ENCODE measurements at regions of chr3 and their contacts with region 1.

Region 1: GRCh38 chr3:100400780-100401673 is at the starts of genes LNP1 and TOMM70:
- DNase-seq: peak; percentile 91
- H3K4me3 Mint-ChIP-seq: peak within 1 kb of the TSS; percentile 96
- H3K27ac Mint-ChIP-seq: peak within 1 kb of the TSS; percentile 99
- H3K4me1 Mint-ChIP-seq: peaks cover 60% of the 10 kb centered on the region
- H3K27me3 Mint-ChIP-seq: peaks cover 2% of the 10 kb centered on the region
- total RNA-seq, gene LNP1: 2.4 and 2.6 TPM in 2 replicates
- total RNA-seq, gene TOMM70: 60.0 and 62.9 TPM in 2 replicates

Region 2: DNA sequence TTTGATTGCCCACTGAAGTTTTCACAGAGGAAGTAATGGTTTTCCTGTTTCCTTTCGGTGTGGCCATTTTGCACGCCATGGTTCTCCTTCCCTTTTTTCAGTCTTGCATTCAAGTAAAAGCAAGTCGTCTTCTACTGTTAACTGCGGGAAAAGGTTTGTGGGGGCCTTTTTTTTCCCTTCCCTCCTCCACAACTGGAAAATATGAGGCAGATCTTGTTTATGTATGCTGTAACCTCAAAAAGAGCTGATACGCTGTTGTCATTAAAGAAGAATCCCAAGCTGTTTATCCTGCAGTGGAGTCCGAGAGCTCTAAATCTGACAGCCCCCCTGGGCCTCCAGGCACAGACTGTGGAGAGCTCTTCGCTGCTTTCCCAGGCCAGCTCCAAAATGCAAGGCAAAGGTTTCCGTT is 327.1 kb before region 1 on chr3:
- intact Hi-C with region 1: loop called (anchors 5 kb)
- DNase-seq: peak; percentile 8
- H3K4me3 Mint-ChIP-seq: peak overlapping the region; percentile 70
- H3K27ac Mint-ChIP-seq: peak overlapping the region; percentile 95
- H3K4me1 Mint-ChIP-seq: peaks cover 68% of the 10 kb centered on the region
- H3K27me3 Mint-ChIP-seq: no peaks in the 10 kb centered on the region

Region 3: DNA sequence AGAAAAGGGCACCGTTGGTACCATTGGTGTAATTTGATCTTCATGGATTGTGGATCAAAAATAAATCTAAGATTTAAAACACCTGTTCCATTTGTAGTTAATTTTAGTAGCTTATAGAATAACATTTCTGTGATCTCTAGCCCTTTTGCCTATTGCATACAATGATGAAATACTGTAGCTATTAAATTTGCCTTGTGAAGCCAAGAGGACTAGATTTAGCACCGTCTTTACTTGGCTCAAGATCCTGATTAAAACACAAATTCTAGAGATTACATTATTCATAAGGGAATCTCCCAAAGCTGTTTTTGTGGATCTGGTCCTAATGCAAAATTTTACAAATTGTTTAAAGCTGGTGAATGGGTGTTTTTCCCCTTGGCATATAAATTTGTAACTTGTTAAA is 132.0 kb before region 1 on chr3:
- intact Hi-C with region 1: no loop called
- DNase-seq: no peak
- H3K4me3 Mint-ChIP-seq: no peak overlapping the region
- H3K27ac Mint-ChIP-seq: no peak overlapping the region
- H3K4me1 Mint-ChIP-seq: peaks cover 20% of the 10 kb centered on the region
- H3K27me3 Mint-ChIP-seq: peaks cover 2% of the 10 kb centered on the region

Region 4: GRCh38 chr3:100334488-100335351 is 66.3 kb before region 1 on chr3 and contains the start of gene NIT2:
- intact Hi-C with region 1: loop called (anchors 1 kb)
- DNase-seq: peak; percentile 73
- H3K4me3 Mint-ChIP-seq: peak within 1 kb of the TSS; percentile 94
- H3K27ac Mint-ChIP-seq: peak within 1 kb of the TSS; percentile 98
- H3K4me1 Mint-ChIP-seq: peaks cover 14% of the 10 kb centered on the region
- H3K27me3 Mint-ChIP-seq: no peaks in the 10 kb centered on the region
- total RNA-seq, gene NIT2: 65.9 and 69.5 TPM in 2 replicates

Region 5: DNA sequence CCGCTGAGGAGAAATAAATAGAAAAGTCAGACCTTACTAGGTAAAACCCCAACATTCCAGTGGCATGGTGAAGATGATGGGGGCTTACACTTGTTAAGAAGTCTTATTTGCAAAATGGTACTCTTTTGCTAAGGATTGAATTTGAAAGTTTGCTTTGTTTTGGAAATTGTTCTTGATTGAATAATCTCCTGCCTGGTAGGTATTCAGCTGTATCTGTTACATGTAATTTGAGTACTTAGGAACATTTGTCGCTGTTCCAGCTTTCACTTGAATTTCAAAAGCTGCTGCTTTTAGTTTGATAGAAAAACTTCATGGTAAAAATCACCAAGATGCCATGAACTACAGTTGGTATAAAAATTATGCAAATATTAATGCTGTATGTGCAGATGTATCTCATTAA is 352.8 kb after region 1 on chr3:
- intact Hi-C with region 1: no loop called
- DNase-seq: no peak
- H3K4me3 Mint-ChIP-seq: no peak overlapping the region
- H3K27ac Mint-ChIP-seq: no peak overlapping the region
- H3K4me1 Mint-ChIP-seq: no peaks in the 10 kb centered on the region
- H3K27me3 Mint-ChIP-seq: no peaks in the 10 kb centered on the region

Region 6: GRCh38 chr3:101381809-101382208 is 980.8 kb after region 1 on chr3:
- intact Hi-C with region 1: loop called (anchors 2 kb)
- DNase-seq: no peak
- H3K4me3 Mint-ChIP-seq: no peak overlapping the region
- H3K27ac Mint-ChIP-seq: no peak overlapping the region
- H3K4me1 Mint-ChIP-seq: peaks cover 36% of the 10 kb centered on the region
- H3K27me3 Mint-ChIP-seq: peaks cover 2% of the 10 kb centered on the region

Region 7: DNA sequence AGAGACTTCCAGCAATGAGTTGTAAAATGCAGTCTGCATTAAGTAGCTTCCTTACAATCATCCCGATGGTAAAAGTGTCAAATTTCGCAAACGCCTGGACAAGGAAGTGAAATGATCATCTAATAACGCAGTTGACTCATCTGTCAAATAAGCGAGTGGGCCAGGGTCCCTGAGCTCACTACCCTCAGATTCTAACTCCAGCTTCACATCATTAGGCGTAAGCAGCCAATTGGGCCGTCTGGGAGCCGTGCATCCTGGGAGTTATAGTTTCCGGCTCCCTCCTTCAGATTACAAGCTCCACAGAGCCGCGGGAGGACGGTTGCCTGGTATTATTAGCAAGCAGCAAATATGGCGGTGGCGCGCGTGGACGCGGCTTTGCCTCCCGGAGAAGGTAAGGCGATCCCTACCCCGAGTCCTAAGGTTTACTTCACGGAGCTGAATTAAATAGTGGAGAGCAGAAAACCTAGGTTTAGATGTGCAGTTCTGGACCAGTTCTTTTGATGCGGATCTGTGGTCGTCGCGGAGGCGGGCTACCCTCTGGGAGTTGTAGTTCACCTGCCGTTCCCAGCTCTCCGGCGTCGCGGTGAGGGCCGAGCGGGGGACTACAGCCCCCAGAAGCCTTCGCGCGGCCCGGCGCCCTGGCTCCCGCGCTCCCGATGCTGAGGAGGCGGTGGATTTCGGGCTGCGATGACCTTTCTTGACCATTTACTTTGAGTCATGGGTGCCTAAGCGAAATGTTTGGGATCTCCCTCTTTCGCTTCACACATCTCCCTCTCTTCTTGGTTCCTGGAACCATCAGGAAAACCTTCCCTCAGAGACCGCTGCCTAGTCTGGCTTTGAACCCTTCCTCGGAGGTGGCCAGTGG is 1323.5 kb after region 1 on chr3 and contains the start of gene CEP97:
- intact Hi-C with region 1: loop called (anchors 2 kb)
- DNase-seq: peak; percentile 85
- H3K4me3 Mint-ChIP-seq: peak within 1 kb of the TSS; percentile 94
- H3K27ac Mint-ChIP-seq: peak within 1 kb of the TSS; percentile 96
- H3K4me1 Mint-ChIP-seq: peaks cover 54% of the 10 kb centered on the region
- H3K27me3 Mint-ChIP-seq: no peaks in the 10 kb centered on the region
- total RNA-seq, gene CEP97: 20.2 and 20.6 TPM in 2 replicates

Measured in activated T-helper 1 cell treated with anti-CD3 and anti-CD28 coated beads, Interleukin-12 subunit alpha, Interleukin-12 subunit beta, Interleukin-2, Interleukin-4 antibody, amounts not matched to agents 30 ng/mL and 10 ng/mL and 1 ng/mL, durations not matched to agents 14 hours and 24 hours and 36 hours (primary cell).